ENCODE measurements at regions of chr12 and their contacts with region 1.

Region 1: GRCh38 chr12:43957732-43958372 is 122.0 kb downstream of the TMEM117 start:
- DNase-seq: peak; percentile 52
- H3K4me3 ChIP-seq: no peak overlapping the region
- H3K27ac ChIP-seq: no peak overlapping the region
- H3K4me1 ChIP-seq: no peaks in the 10 kb centered on the region
- H3K27me3 ChIP-seq: no peaks in the 10 kb centered on the region
- CTCF ChIP-seq: peak; percentile 56 to 62

Region 2: DNA sequence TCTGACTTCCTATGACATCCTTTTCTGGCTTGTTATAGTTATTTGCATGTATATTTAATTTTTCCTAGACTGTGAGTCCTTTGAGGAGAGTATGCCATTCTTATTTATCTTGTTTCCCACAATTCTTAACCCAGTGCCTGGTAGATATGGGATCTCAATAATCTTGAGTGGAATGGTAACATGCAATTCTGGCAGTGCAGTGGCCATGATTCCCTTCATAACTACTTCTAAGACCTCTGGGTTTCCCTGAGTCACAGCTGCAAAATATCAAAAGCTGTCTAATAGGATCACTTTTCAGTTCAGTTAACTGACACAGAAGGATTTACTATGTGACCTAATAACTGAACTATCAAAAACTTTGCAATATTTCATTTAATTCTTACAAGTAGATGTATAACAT is 540.9 kb before region 1 on chr12:
- CTCF ChIA-PET with region 1: no interaction called
- dilution Hi-C with region 1: no loop called
- in situ Hi-C with region 1: no loop called
- intact Hi-C with region 1: no loop called
- DNase-seq: no peak
- H3K4me3 ChIP-seq: no peak overlapping the region
- H3K27ac ChIP-seq: no peak overlapping the region
- H3K4me1 ChIP-seq: no peaks in the 10 kb centered on the region
- H3K27me3 ChIP-seq: peaks cover 2% of the 10 kb centered on the region
- CTCF ChIP-seq: no peak

Region 3: DNA sequence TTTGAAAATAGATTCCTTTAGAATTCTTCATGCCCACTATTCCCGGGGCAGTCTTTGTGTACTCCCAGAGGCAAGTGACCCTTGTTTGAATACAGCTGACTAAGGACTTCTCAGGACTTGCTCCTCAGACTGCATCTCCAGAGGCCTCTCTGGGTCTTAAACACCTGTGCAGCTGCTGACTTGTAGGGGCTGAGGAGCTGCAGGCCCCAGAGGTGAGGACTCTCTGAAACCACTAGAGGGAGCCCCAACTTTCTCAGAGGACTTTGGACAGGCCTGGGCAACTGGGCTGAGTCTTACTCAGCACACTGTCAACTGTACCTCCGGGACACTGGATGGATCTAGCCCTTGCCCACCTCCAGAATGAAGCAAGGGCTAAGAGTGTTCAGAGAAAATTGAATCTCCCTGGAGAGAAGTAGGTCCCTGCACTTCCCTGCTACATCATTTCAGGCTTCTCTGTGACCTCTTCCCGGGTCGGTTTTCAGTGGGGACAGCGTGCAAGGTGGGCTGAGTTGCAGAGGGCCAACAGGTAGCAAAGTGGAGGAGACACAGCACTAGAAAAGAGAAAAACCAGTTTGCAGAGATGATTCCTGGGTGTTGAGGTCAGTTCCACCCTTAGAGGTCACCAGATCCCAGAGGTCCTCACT is 42.6 kb after region 1 on chr12:
- CTCF ChIA-PET with region 1: no interaction called
- dilution Hi-C with region 1: no loop called
- in situ Hi-C with region 1: no loop called
- intact Hi-C with region 1: loop called (anchors 1 kb)
- DNase-seq: peak; percentile 72
- H3K4me3 ChIP-seq: no peak overlapping the region
- H3K27ac ChIP-seq: no peak overlapping the region
- H3K4me1 ChIP-seq: no peaks in the 10 kb centered on the region
- H3K27me3 ChIP-seq: no peaks in the 10 kb centered on the region
- CTCF ChIP-seq: peak; percentile 81 to 90